ENCODE measurements at regions of chr5 and their contacts with region 1.

Region 1: GRCh38 chr5:136174021-136174659 is 18.8 kb downstream of the SMIM32 start:
- DNase-seq: no peak
- H3K4me3 ChIP-seq: no peak overlapping the region
- H3K27ac ChIP-seq: no peak overlapping the region
- H3K27me3 ChIP-seq: no peaks in the 10 kb centered on the region
- CTCF ChIP-seq: peak in 55 of 56 donors; percentile 34 to 86 (median 73)

Region 2: GRCh38 chr5:135977375-135977928 is 196.7 kb before region 1 on chr5:
- intact Hi-C with region 1: loop called in 1 of 2 experiments (anchors 10 kb)
- DNase-seq: peak in 8 of 10 donors; percentile 6 to 63 (median 34)
- H3K4me3 ChIP-seq: no peak overlapping the region
- H3K27ac ChIP-seq: no peak overlapping the region
- H3K27me3 ChIP-seq: peaks cover 0 to 43% (median 15%) of the 10 kb centered on the region in 45 donors
- CTCF ChIP-seq: peak in 54 of 56 donors; percentile 24 to 74 (median 60)

Region 3: DNA sequence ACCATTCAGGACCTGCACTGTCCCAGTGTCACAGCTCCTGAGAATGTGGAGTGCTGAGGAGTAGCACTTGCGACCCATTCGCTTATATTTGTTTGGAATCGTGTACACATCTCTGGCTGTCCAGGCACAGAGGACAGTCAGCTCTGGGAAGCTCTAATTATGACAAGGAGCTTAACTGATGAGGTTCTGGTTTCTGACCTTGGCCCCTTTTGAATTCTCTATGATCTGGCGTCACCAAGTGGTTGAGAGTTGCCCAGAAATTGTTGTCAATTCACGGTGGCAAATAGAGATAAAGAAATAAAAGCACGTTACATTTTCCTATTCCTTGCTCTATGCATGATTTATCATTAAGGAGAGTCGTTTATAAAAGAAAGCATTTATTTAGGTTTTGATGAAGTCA is 184.5 kb before region 1 on chr5:
- intact Hi-C with region 1: no loop called
- DNase-seq: no peak
- H3K4me3 ChIP-seq: no peak overlapping the region
- H3K27ac ChIP-seq: no peak overlapping the region
- H3K27me3 ChIP-seq: peaks cover 0 to 4% (median 0%) of the 10 kb centered on the region in 45 donors
- CTCF ChIP-seq: no peak

Region 4: DNA sequence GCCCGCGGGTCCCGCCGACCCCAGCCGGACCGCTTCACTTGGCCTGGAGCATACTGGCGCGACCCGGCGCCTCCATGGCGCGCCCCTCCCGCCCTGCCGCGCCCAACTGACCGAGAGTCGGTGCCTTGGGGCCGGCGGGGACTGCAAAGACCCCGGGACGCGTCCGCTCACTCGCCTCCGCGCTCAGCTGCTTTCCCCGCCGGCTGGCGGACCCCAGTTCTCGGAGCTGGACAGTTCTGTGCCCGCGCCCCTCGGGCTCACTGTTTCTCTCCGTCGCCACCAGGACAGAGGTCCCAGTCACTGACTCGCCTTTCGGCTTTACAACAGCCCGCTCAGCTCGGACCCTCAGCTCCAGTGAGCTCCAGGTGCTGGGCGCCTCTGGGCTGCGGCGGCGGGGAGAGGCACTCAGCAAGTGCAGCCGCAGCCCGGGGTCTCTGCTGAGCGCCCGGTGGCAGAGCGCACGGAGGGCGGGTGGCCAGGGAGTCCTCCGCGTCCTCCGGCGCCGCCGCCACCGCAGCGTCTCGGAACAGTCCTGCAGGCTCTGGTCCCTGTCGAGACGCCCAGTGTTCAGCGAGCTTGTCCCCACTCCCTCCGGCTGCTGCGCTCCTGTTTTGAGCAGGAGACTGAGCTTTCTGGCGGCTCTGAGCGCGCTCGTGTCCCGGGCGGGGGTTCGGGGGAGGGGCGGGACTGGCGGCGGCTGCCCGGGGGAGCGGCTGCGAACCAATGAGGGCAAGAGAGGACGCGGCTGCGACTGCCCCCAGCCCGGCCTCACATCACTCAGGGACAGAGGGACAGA is 18.6 kb after region 1 on chr5 and contains the start of gene SMIM32:
- intact Hi-C with region 1: no loop called
- DNase-seq: peak in 2 of 10 donors; percentile 32 to 51
- H3K4me3 ChIP-seq: peak within 1 kb of the TSS in 58 of 59 donors; percentile 26 to 71 (median 54)
- H3K27ac ChIP-seq: no peak within 1 kb of the TSS
- H3K27me3 ChIP-seq: peaks cover 0 to 58% (median 25%) of the 10 kb centered on the region in 45 donors
- CTCF ChIP-seq: no peak
- total RNA-seq, gene SMIM32: 0.45 to 10.8 (median 2.8) TPM in 117 of 120 experiments, not detected in the others

Measured in dorsolateral prefrontal cortex (tissue), 120 donors.